ENCODE measurements at regions of chr16 and their contacts with region 1.

Region 1: DNA sequence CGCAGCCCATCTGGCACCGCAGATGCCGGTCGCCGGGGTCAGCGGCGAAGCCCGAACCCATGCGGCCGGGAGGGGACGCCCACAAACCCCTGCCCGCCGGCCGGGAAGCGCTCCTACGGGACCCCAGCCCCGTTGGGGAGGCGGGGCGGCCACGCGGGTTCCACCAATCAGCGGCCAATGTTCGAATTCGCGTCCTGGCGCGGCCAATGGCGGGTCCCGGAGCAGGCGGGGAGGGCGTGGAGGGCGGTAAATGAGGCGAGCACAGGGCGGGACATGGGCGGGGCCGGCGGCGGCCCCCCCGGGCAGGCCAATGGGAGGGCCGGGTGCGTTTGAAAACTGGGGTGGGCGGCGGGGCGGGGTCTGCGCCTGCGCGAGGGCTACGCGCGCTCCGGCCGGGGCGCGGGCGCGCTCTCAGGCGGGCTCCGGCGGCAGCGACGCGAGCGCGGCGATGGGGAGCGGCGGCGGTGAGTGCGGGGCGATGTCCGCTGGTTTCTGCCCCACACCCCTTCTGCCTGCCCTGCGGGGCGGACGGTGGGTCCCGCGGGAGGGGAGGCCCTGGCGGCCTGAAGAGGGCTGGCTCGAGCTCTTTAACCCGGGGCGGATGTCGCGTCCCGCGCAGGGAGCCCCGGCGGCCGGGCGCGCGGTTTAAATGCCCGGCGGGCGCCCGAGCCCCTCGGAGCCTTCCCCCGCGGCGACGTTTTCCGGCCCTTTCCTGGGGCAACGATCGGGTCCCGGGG is at the start of gene CCNF:
- DNase-seq: peak; percentile 96 to 97
- ATAC-seq: peak; percentile 95 to 97
- H3K4me3 ChIP-seq: peak within 1 kb of the TSS; percentile 64 to 97 (median 87)
- H3K27ac ChIP-seq: peak within 1 kb of the TSS; percentile 73 to 78 (median 76)
- H3K4me1 ChIP-seq: peaks cover 6 to 8% of the 10 kb centered on the region in 2 donors
- H3K27me3 ChIP-seq: no peaks in the 10 kb centered on the region
- CTCF ChIP-seq: peak in 2 of 5 experiments; percentile 26 to 35
- POLR2A ChIP-seq: peak; percentile 51 to 52
- total RNA-seq, gene CCNF: 1.8 to 3.6 (median 2.4) TPM

Region 2: GRCh38 chr16:2459647-2460390 is 30.6 kb after region 1 on chr16 and contains the start of gene TEDC2:
- in situ Hi-C with region 1: no loop called
- intact Hi-C with region 1: loop called (anchors 2 kb)
- DNase-seq: peak; percentile 90 to 95
- ATAC-seq: peak; percentile 96 to 97
- H3K4me3 ChIP-seq: peak within 1 kb of the TSS; percentile 56 to 64 (median 60)
- H3K27ac ChIP-seq: peak within 1 kb of the TSS; percentile 53 to 73 (median 68)
- H3K4me1 ChIP-seq: peaks cover 4 to 13% of the 10 kb centered on the region in 2 donors
- H3K27me3 ChIP-seq: no peaks in the 10 kb centered on the region
- CTCF ChIP-seq: no peak
- POLR2A ChIP-seq: no peak
- total RNA-seq, gene TEDC2: 0.33 to 0.91 TPM in 2 of 4 donors, not detected in the others